Naive thymus-derived CD4-positive, alpha-beta T cell (primary cell): ENCODE measurements at regions of chr7 and their contacts with region 1.

Region 1: GRCh38 chr7:44797329-44798251 is 1.1 kb downstream of the PPIA start:
- DNase-seq: peak; percentile 65 to 86 (median 80)
- ATAC-seq: peak; percentile 67
- H3K4me3 ChIP-seq: peak overlapping the region; percentile 87
- H3K4me3 Mint-ChIP-seq: peak overlapping the region; percentile 87 to 99 (median 98)
- H3K27ac ChIP-seq: peak overlapping the region; percentile 98
- H3K27ac Mint-ChIP-seq: peak overlapping the region; percentile 90 to 99 (median 97)
- H3K4me1 ChIP-seq: peaks cover 12 to 21% of the 10 kb centered on the region in 2 donors
- H3K4me1 Mint-ChIP-seq: peaks cover 8 to 41% (median 38%) of the 10 kb centered on the region in 7 donors
- H3K27me3 ChIP-seq: no peaks in the 10 kb centered on the region
- H3K27me3 Mint-ChIP-seq: no peaks in the 10 kb centered on the region

Region 2: DNA sequence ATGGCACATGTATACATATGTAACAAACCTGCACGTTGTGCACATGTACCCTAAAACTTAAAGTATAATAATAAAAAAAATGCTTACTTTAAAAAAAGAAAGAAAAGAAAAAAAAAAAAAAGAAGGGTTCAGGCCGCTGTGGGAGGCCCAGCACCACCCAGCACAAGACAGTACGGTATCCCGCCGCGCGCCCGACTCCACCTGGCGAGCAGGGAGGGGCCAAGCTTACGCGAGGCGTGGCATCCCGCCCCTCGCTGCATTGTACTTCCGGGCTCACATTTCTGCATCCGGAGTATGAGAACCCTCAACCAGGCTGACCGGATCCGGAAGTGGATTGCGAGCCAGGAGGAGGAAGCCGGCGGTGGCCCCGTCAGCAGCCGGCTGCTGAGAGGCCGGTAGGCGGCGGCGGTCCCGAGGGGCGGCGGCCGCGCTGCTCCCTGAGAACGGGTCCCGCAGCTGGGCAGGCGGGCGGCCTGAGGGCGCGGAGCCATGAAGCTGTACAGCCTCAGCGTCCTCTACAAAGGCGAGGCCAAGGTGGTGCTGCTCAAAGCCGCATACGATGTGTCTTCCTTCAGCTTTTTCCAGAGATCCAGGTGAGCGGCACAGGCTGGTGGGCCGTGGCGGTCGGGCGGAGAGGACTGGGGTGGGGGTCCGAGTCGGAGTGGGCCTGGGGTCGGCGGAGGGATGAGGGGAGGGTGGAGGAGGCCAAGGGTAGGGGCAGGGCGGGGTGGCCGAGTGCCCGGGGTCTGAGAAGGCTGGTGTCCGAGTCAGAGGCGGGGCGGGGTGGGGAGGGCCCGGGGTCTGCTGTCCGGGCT is 596.7 kb before region 1 on chr7 and contains the start of gene YKT6:
- CTCF ChIA-PET with region 1: interaction called, 6 read pairs
- POLR2A ChIA-PET with region 1: no interaction called
- intact Hi-C with region 1: loop called in 1 of 2 experiments (anchors 2 kb)
- DNase-seq: peak; percentile 73 to 94 (median 93)
- ATAC-seq: peak; percentile 99
- H3K4me3 ChIP-seq: peak within 1 kb of the TSS; percentile 95
- H3K4me3 Mint-ChIP-seq: peak within 1 kb of the TSS; percentile 81 to 90 (median 85)
- H3K27ac ChIP-seq: peak within 1 kb of the TSS; percentile 91
- H3K27ac Mint-ChIP-seq: peak within 1 kb of the TSS; percentile 19 to 88 (median 63)
- H3K4me1 ChIP-seq: peaks cover 15 to 16% of the 10 kb centered on the region in 2 donors
- H3K4me1 Mint-ChIP-seq: peaks cover 24 to 38% (median 32%) of the 10 kb centered on the region in 7 donors
- H3K27me3 ChIP-seq: no peaks in the 10 kb centered on the region
- H3K27me3 Mint-ChIP-seq: peaks cover 0 to 7% (median 3%) of the 10 kb centered on the region in 5 donors
- total RNA-seq, gene YKT6: 58.1 to 80.9 (median 62.3) TPM

Region 3: DNA sequence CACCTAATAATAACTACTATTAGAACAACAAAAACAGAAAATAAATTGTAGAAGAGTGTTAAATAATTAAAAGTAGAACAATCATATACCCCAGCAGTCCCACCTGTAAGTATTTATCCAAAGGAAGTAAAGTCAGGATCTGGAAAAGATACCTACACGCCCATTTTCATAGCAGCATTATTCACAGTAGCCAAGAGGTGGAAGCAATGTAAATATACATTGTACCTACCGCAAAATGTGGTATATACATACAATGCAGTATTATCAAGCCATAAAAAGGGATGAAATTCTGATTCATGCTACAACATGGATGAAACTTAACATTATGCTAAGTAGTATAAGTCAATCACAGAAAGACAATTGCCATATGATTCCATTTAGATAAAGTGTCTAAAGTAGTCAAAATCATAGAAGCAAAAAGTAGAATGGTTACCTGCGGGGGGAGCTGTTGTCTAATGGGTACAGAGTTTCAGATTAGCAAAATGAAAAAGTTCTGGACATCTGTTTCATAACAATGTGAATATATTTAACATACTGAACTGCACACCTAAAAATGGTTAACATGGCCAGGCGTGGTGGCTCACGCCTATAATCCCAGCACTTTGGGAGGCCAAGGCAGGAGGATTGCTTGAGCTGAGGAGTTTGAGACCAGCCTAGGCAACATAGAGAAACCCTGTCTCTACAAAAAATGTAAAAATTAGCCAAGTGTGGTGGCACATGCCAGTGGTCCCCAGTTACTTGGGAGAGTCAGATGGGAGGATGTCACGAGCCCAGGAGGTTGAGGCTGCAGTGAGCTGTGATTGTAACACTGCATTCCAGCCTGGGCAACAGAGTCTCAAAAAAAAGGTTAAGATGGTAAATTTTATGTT is 209.5 kb before region 1 on chr7:
- CTCF ChIA-PET with region 1: no interaction called
- POLR2A ChIA-PET with region 1: interaction called, 21 read pairs
- intact Hi-C with region 1: loop called (anchors 1 kb)
- DNase-seq: peak in 7 of 9 donors; percentile 35 to 63 (median 60)
- ATAC-seq: peak; percentile 90
- H3K4me3 ChIP-seq: no peak overlapping the region
- H3K4me3 Mint-ChIP-seq: no peak overlapping the region
- H3K27ac ChIP-seq: no peak overlapping the region
- H3K27ac Mint-ChIP-seq: peak overlapping the region in 3 of 9 donors; percentile 6 to 71 (median 25)
- H3K4me1 ChIP-seq: peaks cover 0 to 4% of the 10 kb centered on the region in 2 donors
- H3K4me1 Mint-ChIP-seq: peaks cover 0 to 18% (median 6%) of the 10 kb centered on the region in 7 donors
- H3K27me3 ChIP-seq: no peaks in the 10 kb centered on the region
- H3K27me3 Mint-ChIP-seq: peaks cover 0 to 9% (median 0%) of the 10 kb centered on the region in 5 donors

Region 4: GRCh38 chr7:44712012-44712411 is 85.6 kb before region 1 on chr7:
- CTCF ChIA-PET with region 1: no interaction called
- POLR2A ChIA-PET with region 1: no interaction called
- intact Hi-C with region 1: no loop called
- DNase-seq: no peak
- ATAC-seq: no peak
- H3K4me3 ChIP-seq: no peak overlapping the region
- H3K4me3 Mint-ChIP-seq: no peak overlapping the region
- H3K27ac ChIP-seq: peak overlapping the region; percentile 14
- H3K27ac Mint-ChIP-seq: peak overlapping the region in 6 of 9 donors; percentile 9 to 76 (median 44)
- H3K4me1 ChIP-seq: peaks cover 0 to 6% of the 10 kb centered on the region in 2 donors
- H3K4me1 Mint-ChIP-seq: peaks cover 4 to 11% (median 7%) of the 10 kb centered on the region in 7 donors
- H3K27me3 ChIP-seq: no peaks in the 10 kb centered on the region
- H3K27me3 Mint-ChIP-seq: no peaks in the 10 kb centered on the region

Region 5: DNA sequence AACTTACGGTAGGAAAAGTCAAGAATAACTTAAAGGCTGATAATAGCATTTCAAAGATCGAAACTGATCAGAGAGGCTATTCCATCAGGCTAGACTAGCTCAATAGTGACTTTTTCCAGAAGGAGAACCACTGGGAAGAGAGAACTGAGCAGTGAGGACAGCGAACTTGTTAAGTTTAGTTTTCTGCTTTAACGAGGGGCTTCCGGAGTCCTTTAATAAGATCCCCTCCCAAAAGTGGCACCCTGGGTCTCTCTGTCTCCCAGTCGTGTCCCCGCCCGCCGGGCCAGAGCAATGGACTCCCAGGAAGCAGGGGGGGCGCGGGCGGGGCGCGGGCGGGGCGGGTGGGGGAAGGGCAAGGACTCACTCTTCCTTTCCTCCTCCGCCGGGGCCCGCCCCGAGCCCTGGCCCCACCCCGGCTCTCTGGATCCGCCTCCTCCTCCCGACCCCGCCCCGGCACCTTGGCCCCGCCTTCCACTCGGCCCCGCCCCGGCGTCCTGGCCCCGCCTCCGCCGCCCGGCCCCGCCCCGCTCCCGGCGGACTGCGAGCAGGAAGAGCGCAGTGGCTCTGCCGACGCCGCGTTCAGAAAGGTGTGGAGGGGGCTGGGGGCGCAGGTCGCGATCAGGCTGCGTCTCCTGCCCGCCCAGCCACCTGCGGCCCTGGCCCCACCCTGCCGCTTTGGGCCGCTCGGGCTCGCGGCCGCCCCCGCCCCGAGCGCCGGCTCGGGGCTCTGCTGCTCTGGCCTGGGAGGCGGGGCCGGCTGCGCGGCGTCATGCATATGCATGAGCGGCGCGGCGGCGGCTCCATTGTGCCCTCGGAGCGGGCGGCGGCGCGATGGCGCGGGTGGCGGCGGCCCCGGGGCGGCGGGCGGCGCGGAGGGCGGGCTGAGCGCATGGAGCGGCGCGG is 49.3 kb before region 1 on chr7 and contains the start of gene ZMIZ2:
- CTCF ChIA-PET with region 1: interaction called, 3 read pairs
- POLR2A ChIA-PET with region 1: interaction called, 7 read pairs
- intact Hi-C with region 1: loop called (anchors 1 kb)
- DNase-seq: peak; percentile 87 to 99 (median 93)
- ATAC-seq: peak; percentile 94
- H3K4me3 ChIP-seq: peak within 1 kb of the TSS; percentile 64
- H3K4me3 Mint-ChIP-seq: peak within 1 kb of the TSS; percentile 77 to 92 (median 88)
- H3K27ac ChIP-seq: peak within 1 kb of the TSS; percentile 98
- H3K27ac Mint-ChIP-seq: peak within 1 kb of the TSS; percentile 81 to 98 (median 92)
- H3K4me1 ChIP-seq: peaks cover 21 to 22% of the 10 kb centered on the region in 2 donors
- H3K4me1 Mint-ChIP-seq: peaks cover 22 to 63% (median 45%) of the 10 kb centered on the region in 7 donors
- H3K27me3 ChIP-seq: no peaks in the 10 kb centered on the region
- H3K27me3 Mint-ChIP-seq: no peaks in the 10 kb centered on the region
- total RNA-seq, gene ZMIZ2: 108 to 187 (median 144) TPM

Region 6: DNA sequence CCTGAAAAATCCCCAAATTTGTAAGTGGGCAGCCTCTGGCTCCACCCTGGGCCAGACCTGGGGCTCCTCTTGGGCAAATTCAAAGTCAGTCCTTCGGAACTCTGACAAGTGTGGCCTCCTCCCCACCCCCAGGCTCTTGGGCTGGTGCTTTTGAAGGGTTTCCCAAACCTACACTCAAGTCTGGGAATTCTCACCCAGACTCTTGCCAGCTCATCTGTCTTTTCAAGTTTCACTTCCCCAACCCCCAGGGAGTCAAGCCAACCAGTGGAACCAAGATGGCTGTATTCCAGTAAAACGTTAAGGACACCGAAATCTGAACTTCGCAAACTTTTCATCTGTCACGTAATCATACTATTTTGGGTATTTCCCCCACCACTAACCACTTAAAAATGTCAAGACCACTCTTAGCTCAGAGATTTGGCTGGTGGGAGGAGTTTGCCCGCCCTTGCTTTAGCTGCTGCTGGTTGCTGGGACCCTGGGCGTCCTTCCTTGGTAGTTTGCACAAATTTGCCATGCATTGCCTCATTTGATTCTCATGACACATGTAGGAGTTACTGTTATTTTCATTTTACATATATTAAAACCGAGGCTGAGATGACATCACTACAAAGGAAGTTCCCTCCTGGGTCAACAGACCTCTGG is 182.9 kb after region 1 on chr7:
- CTCF ChIA-PET with region 1: no interaction called
- POLR2A ChIA-PET with region 1: no interaction called
- intact Hi-C with region 1: loop called in 1 of 2 experiments (anchors 5 kb)
- DNase-seq: peak in 2 of 9 donors; percentile 63 to 69
- ATAC-seq: peak; percentile 38
- H3K4me3 ChIP-seq: peak overlapping the region; percentile 78
- H3K4me3 Mint-ChIP-seq: peak overlapping the region; percentile 39 to 100 (median 70)
- H3K27ac ChIP-seq: peak overlapping the region; percentile 83
- H3K27ac Mint-ChIP-seq: peak overlapping the region; percentile 85 to 99 (median 96)
- H3K4me1 ChIP-seq: peaks cover 60 to 63% of the 10 kb centered on the region in 2 donors
- H3K4me1 Mint-ChIP-seq: peaks cover 54 to 96% (median 68%) of the 10 kb centered on the region in 7 donors
- H3K27me3 ChIP-seq: no peaks in the 10 kb centered on the region
- H3K27me3 Mint-ChIP-seq: no peaks in the 10 kb centered on the region